Vagina (tissue), 2 donors: ENCODE measurements at regions of chr12 and their contacts with region 1.

Region 1: DNA sequence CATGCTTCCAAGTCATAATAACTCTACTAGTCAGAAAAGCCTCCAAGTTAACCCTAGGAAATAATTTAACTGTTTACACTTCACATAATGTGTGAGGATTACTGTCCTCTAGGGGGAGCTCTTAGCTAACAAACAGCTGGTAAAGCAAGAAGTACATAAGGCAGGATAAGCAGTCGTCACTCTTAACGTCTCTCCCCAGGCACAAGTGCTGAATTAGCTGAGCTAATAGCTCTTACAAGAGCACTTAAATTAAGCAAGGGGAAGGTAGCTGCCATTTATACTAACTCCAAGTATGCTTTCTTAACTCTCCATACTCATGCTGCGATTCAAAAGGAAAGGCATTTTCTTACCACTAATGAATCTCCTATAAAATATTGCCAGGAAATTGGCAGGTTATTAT is 79.3 kb upstream of the TSPAN11 start:
- DNase-seq: no peak
- H3K4me3 ChIP-seq: no peak overlapping the region
- H3K27ac ChIP-seq: no peak overlapping the region
- H3K4me1 ChIP-seq: peaks cover 5% of the 10 kb centered on the region
- H3K27me3 ChIP-seq: no peaks in the 10 kb centered on the region
- CTCF ChIP-seq: peak; percentile 41 to 55 (median 43)
- POLR2A ChIP-seq: no peak

Region 2: GRCh38 chr12:30120522-30120921 is 726.7 kb before region 1 on chr12:
- intact Hi-C with region 1: no loop called
- DNase-seq: no peak
- H3K4me3 ChIP-seq: no peak overlapping the region
- H3K27ac ChIP-seq: no peak overlapping the region
- H3K4me1 ChIP-seq: no peaks in the 10 kb centered on the region
- H3K27me3 ChIP-seq: no peaks in the 10 kb centered on the region
- CTCF ChIP-seq: no peak
- POLR2A ChIP-seq: no peak

Region 3: GRCh38 chr12:30622509-30622908 is 224.8 kb before region 1 on chr12:
- intact Hi-C with region 1: no loop called
- DNase-seq: no peak
- H3K4me3 ChIP-seq: no peak overlapping the region
- H3K27ac ChIP-seq: no peak overlapping the region
- H3K4me1 ChIP-seq: no peaks in the 10 kb centered on the region
- H3K27me3 ChIP-seq: no peaks in the 10 kb centered on the region
- CTCF ChIP-seq: no peak
- POLR2A ChIP-seq: no peak

Region 4: DNA sequence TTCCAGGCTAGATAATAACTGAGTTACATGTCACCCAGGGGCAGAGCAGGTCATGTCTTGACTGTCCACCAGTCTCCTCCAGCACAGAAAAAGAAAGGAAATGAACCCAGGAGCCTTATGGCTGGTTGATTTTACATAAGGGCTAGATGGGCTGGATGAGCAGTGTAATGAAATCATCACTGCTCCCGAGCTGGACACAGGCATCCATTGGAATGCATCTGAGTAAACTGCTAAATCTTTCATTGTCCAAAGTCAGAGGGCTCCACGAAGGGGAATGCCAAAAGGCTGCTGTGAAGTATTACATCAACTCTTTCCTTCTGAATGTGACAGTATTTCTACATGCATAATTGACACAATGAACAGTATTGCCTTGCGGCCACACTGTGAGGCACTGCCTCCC is 49.2 kb after region 1 on chr12:
- intact Hi-C with region 1: no loop called
- DNase-seq: no peak
- H3K4me3 ChIP-seq: no peak overlapping the region
- H3K27ac ChIP-seq: no peak overlapping the region
- H3K4me1 ChIP-seq: peaks cover 11% of the 10 kb centered on the region
- H3K27me3 ChIP-seq: no peaks in the 10 kb centered on the region
- CTCF ChIP-seq: no peak
- POLR2A ChIP-seq: no peak

Region 5: GRCh38 chr12:30926243-30927221 is 79.3 kb after region 1 on chr12 and contains the start of gene TSPAN11:
- intact Hi-C with region 1: no loop called
- DNase-seq: peak in 1 of 2 donors; percentile 83
- H3K4me3 ChIP-seq: peak within 1 kb of the TSS; percentile 44 to 54
- H3K27ac ChIP-seq: peak within 1 kb of the TSS; percentile 70
- H3K4me1 ChIP-seq: peaks cover 15% of the 10 kb centered on the region
- H3K27me3 ChIP-seq: no peaks in the 10 kb centered on the region
- CTCF ChIP-seq: no peak
- POLR2A ChIP-seq: no peak
- total RNA-seq, gene TSPAN11: 2.5 TPM

Region 6: DNA sequence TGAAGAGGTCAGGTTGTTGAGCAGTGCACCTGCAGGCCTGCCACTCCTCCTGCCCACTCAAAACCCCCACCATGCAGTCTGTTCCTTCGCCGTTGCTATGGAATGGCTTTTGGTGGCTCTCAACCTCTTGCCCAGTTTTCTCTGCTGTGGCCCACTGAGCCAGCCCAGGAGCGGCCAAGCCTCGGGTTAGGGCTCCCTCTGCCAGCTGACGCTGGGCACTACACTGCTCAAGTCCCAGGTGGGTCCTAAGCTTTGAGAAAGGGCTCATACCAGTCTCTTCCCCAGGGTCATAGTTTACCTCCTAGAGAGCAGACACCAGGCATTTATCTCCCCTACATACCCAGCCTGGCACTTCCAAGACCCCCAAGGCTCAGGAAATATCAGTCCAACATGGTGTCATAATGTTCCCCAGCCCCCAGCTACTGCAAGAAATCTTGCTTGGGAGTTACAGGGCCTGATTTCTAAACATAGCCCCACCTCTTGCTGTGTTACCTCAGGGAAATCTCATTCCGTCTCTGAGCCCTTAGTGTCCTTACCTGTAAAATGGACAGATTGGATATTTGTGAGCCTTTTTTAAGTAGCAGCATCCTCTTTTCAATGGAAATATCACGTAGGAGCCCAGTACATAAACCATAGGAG is 138.7 kb after region 1 on chr12:
- intact Hi-C with region 1: loop called (anchors 10 kb)
- DNase-seq: no peak
- H3K4me3 ChIP-seq: no peak overlapping the region
- H3K27ac ChIP-seq: no peak overlapping the region
- H3K4me1 ChIP-seq: no peaks in the 10 kb centered on the region
- H3K27me3 ChIP-seq: no peaks in the 10 kb centered on the region
- CTCF ChIP-seq: peak in 1 of 3 experiments; percentile 55
- POLR2A ChIP-seq: no peak

Region 7: GRCh38 chr12:31274520-31275300 is 427.5 kb after region 1 on chr12:
- intact Hi-C with region 1: loop called (anchors 10 kb)
- DNase-seq: no peak
- H3K4me3 ChIP-seq: no peak overlapping the region
- H3K27ac ChIP-seq: no peak overlapping the region
- H3K4me1 ChIP-seq: no peaks in the 10 kb centered on the region
- H3K27me3 ChIP-seq: no peaks in the 10 kb centered on the region
- CTCF ChIP-seq: no peak
- POLR2A ChIP-seq: no peak